HCT116 (cell line): ENCODE measurements at regions of chr5 and their contacts with region 1.

Region 1: DNA sequence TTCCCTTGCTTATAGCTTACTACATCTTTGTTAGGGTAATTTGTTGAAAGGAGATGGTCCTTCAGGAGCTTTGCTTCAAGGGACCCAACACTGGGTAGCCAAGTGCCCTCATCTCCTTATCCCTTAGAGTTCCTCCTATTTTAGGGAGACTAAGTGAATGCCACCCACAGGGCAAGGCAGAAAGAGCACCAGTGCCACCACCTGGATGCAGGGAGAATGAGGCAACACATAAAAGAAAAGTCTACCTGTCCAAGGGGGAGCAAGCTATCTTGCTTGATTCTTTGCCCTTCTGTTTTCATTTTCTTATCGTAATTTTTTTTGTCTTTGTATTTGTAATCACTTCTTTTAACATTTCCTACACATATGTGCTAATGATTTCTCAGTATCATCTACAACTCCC is 205.5 kb downstream of the NPR3 start:
- DNase-seq: peak; percentile 32
- ATAC-seq: peak; percentile 96
- H3K4me3 ChIP-seq: no peak overlapping the region
- H3K27ac ChIP-seq: no peak overlapping the region
- H3K4me1 ChIP-seq: no peaks in the 10 kb centered on the region
- H3K27me3 ChIP-seq: 0 out of 2 replicates have a peak, but pooled peaks cover 5% of the 10 kb centered on the region
- CTCF ChIP-seq: peak; percentile 61 to 72 (median 67); a peak in 5 of 6 replicates
- POLR2A ChIP-seq: no peak
- RAD21 ChIP-seq: peak; percentile 79

Region 2: DNA sequence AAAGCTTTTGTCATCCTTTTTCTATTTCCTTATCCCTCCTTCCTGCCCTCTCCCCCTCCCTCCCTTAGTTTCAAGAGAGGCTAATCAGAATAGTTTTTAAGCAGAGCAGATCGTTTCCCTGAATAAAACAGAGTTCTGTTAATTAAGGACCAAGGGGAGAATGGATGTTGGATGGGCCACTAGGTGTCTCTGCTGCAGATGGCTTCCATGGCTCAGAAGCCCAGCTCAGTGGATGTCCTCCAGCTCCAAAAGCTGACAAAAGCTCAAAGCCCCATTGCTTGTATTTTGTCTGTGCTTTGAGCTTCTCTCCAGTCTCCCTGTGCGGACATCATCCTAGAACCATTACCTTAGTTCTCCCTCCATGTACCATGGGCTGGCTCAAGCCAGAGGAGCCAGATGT is 226.5 kb before region 1 on chr5:
- CTCF ChIA-PET with region 1: interaction called, 8 read pairs
- POLR2A ChIA-PET with region 1: no interaction called
- RAD21 ChIA-PET with region 1: no interaction called
- intact Hi-C with region 1: loop called (anchors 5 kb)
- DNase-seq: no peak
- ATAC-seq: peak; percentile 74
- H3K4me3 ChIP-seq: no peak overlapping the region
- H3K27ac ChIP-seq: no peak overlapping the region
- H3K4me1 ChIP-seq: no peaks in the 10 kb centered on the region
- H3K27me3 ChIP-seq: no peaks in the 10 kb centered on the region
- CTCF ChIP-seq: peak in 2 of 3 experiments; percentile 43; a peak in 4 of 6 replicates
- POLR2A ChIP-seq: no peak
- RAD21 ChIP-seq: peak; percentile 35; the same call in 1 of the 2 replicates

Region 3: GRCh38 chr5:32932241-32932935 is 15.7 kb after region 1 on chr5:
- CTCF ChIA-PET with region 1: no interaction called
- POLR2A ChIA-PET with region 1: no interaction called
- RAD21 ChIA-PET with region 1: no interaction called
- intact Hi-C with region 1: no loop called
- DNase-seq: no peak
- ATAC-seq: no peak
- H3K4me3 ChIP-seq: no peak overlapping the region
- H3K27ac ChIP-seq: no peak overlapping the region
- H3K4me1 ChIP-seq: no peaks in the 10 kb centered on the region
- H3K27me3 ChIP-seq: no peaks in the 10 kb centered on the region
- CTCF ChIP-seq: no peak
- POLR2A ChIP-seq: no peak
- RAD21 ChIP-seq: no peak